Activated B cell treated with CpG ODN at 0.5 μM for 24 hours (primary cell): ENCODE measurements at regions of chr22 and their contacts with region 1.

Region 1: DNA sequence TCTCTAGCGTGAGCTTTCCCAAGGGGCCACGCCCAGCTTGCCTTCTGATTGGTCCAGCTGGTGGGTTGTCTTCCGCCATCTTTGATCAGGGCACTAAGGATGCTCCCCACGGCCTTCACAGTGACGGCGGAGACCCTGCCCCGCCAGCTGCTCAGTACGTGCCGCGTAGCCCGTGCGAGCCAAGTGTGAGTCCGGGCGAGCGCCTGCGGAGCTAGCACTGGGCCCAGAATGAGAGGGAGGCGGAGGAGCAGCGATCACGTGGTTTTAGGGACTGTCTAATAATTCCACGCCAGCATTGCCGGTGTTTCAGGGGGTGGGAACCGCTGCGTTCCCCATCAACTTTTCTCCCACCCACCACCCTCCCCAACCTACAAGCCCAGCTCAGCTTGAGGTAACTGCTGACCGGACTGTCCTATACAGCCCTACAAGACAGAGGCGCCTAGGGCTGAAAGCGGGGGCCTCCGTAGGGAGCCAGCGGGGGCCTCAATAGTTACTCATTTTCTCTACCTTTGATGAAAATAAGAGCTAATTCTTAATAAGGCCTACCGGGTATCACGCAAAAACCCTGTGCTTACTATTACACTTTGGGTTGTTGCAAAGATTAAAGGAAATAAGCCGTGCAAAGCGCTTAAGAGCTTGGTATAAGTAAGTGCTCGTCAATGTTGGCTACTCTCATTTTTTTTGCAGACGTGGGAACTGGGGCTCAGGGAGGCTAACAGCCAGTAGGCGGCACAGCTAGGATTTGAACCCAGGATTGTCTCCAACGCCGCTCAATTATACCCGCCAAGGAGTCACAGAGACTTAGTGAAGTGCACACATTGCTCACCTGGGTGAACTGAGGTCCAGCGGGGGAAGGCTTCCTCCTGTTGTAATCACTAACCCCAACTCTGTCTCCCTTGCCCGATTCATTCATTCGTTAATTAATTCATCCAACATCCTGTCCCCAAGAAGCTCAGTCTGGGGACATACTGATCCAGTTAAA is 1.3 kb upstream of the MTFP1 start:
- DNase-seq: peak; percentile 89
- ATAC-seq: peak; percentile 88
- H3K4me3 Mint-ChIP-seq: peak overlapping the region; percentile 97
- H3K27ac Mint-ChIP-seq: peak overlapping the region; percentile 96
- H3K4me1 Mint-ChIP-seq: peaks cover 47% of the 10 kb centered on the region
- H3K27me3 Mint-ChIP-seq: no peaks in the 10 kb centered on the region
- CTCF ChIP-seq: no peak

Region 2: GRCh38 chr22:29580200-29580810 is 844.0 kb before region 1 on chr22:
- CTCF ChIA-PET with region 1: no interaction called
- POLR2A ChIA-PET with region 1: no interaction called
- intact Hi-C with region 1: loop called (anchors 2 kb)
- DNase-seq: no peak
- ATAC-seq: no peak
- H3K4me3 Mint-ChIP-seq: peak overlapping the region; percentile 92
- H3K27ac Mint-ChIP-seq: peak overlapping the region; percentile 86
- H3K4me1 Mint-ChIP-seq: peaks cover 18% of the 10 kb centered on the region
- H3K27me3 Mint-ChIP-seq: no peaks in the 10 kb centered on the region
- CTCF ChIP-seq: no peak

Region 3: GRCh38 chr22:30262917-30263741 is 161.1 kb before region 1 on chr22:
- CTCF ChIA-PET with region 1: interaction called, 4 read pairs
- POLR2A ChIA-PET with region 1: interaction called, 3 read pairs
- intact Hi-C with region 1: loop called (anchors 1 kb)
- DNase-seq: peak; percentile 72
- ATAC-seq: peak; percentile 13
- H3K4me3 Mint-ChIP-seq: peak overlapping the region; percentile 59
- H3K27ac Mint-ChIP-seq: peak overlapping the region; percentile 18
- H3K4me1 Mint-ChIP-seq: peaks cover 27% of the 10 kb centered on the region
- H3K27me3 Mint-ChIP-seq: no peaks in the 10 kb centered on the region
- CTCF ChIP-seq: peak; percentile 97

Region 4: GRCh38 chr22:30356449-30357235 is 67.6 kb before region 1 on chr22 and contains the starts of genes CCDC157 and SF3A1:
- CTCF ChIA-PET with region 1: interaction called, 4 read pairs
- POLR2A ChIA-PET with region 1: interaction called, 12 read pairs
- intact Hi-C with region 1: loop called (anchors 1 kb)
- DNase-seq: peak; percentile 88
- ATAC-seq: peak; percentile 86
- H3K4me3 Mint-ChIP-seq: peak within 1 kb of the TSS; percentile 92
- H3K27ac Mint-ChIP-seq: peak within 1 kb of the TSS; percentile 76
- H3K4me1 Mint-ChIP-seq: peaks cover 43% of the 10 kb centered on the region
- H3K27me3 Mint-ChIP-seq: no peaks in the 10 kb centered on the region
- CTCF ChIP-seq: no peak
- total RNA-seq, gene CCDC157: 1.8 and 2.9 TPM in 2 replicates
- total RNA-seq, gene SF3A1: 263 and 269 TPM in 2 replicates

Region 5: GRCh38 chr22:30375312-30375849 is 48.9 kb before region 1 on chr22:
- CTCF ChIA-PET with region 1: no interaction called
- POLR2A ChIA-PET with region 1: no interaction called
- intact Hi-C with region 1: no loop called
- DNase-seq: no peak
- ATAC-seq: no peak
- H3K4me3 Mint-ChIP-seq: no peak overlapping the region
- H3K27ac Mint-ChIP-seq: no peak overlapping the region
- H3K4me1 Mint-ChIP-seq: peaks cover 3% of the 10 kb centered on the region
- H3K27me3 Mint-ChIP-seq: no peaks in the 10 kb centered on the region
- CTCF ChIP-seq: no peak

Region 6: DNA sequence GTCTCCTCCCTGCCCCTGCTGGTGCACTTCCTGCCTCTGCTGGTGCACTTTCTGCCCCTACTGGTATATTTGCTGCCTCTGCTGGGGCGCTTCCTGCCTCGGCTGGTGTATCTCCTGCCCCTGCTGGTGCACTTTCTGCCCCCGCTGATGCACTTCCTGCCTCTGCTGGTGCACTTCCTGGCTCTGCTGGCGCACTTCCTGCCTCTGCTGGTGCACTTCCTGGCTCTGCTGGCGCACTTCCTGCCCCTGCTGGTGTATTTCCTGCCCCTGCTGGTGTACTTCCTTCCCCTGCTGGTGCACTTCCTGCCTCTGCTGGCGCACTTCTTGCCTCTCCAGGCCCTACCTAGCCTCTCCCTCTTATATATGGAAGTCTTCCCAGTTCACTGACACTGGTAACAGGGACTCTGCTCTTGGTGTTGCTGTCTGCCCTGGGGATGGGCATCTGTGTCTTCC is 11.4 kb after region 1 on chr22:
- CTCF ChIA-PET with region 1: interaction called, 8 read pairs
- POLR2A ChIA-PET with region 1: interaction called, 36 read pairs
- intact Hi-C with region 1: loop called (anchors 1 kb)
- DNase-seq: no peak
- ATAC-seq: peak; percentile 71
- H3K4me3 Mint-ChIP-seq: peak overlapping the region; percentile 64
- H3K27ac Mint-ChIP-seq: peak overlapping the region; percentile 79
- H3K4me1 Mint-ChIP-seq: peaks cover 14% of the 10 kb centered on the region
- H3K27me3 Mint-ChIP-seq: peaks cover 15% of the 10 kb centered on the region
- CTCF ChIP-seq: no peak

Region 7: GRCh38 chr22:30492144-30492543 is 67.9 kb after region 1 on chr22:
- CTCF ChIA-PET with region 1: no interaction called
- POLR2A ChIA-PET with region 1: no interaction called
- intact Hi-C with region 1: no loop called
- DNase-seq: no peak
- ATAC-seq: no peak
- H3K4me3 Mint-ChIP-seq: no peak overlapping the region
- H3K27ac Mint-ChIP-seq: no peak overlapping the region
- H3K4me1 Mint-ChIP-seq: no peaks in the 10 kb centered on the region
- H3K27me3 Mint-ChIP-seq: peaks cover 19% of the 10 kb centered on the region
- CTCF ChIP-seq: no peak

Region 8: GRCh38 chr22:30547188-30547587 is 122.9 kb after region 1 on chr22:
- CTCF ChIA-PET with region 1: no interaction called
- POLR2A ChIA-PET with region 1: no interaction called
- intact Hi-C with region 1: no loop called
- DNase-seq: no peak
- ATAC-seq: no peak
- H3K4me3 Mint-ChIP-seq: no peak overlapping the region
- H3K27ac Mint-ChIP-seq: no peak overlapping the region
- H3K4me1 Mint-ChIP-seq: no peaks in the 10 kb centered on the region
- H3K27me3 Mint-ChIP-seq: peaks cover 28% of the 10 kb centered on the region
- CTCF ChIP-seq: no peak

Region 9: DNA sequence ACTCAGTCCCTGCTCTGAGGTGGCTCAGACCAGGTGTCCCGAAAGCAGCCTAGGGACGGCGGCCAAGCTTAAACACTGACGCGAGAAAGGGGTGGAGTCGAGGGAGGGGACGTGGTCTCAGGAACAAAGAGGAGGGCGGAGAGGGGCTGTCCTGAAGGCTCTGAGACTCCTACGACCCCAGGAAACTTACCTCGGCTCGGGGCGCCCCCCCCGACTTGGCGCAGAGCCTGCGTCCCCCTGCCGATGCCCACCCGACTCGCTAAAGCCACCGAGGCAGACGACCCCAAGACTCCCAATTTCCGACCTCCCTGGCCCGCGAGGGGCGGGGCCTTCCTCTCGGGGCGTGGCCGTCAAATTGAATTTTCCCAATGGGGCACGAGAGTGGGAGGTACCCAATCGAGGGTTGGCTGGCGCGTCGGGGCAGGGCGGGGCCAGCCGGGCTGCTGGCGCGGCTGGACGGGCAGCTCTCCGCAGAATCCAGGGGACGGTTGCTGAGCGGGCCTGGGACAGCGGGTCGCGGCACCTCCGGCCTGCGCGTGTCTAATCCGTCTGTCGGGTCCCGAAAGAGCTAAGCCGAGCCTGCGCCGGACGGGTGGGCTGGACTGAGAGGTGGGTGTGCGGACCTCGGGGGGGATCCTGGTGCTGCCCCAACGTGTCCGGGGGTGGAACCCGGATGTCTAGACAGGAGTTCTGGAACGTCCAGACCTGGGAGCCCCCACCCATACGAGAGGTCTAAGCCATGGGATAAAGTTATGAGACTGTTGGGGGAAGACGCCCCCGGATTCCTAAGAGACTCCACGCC is 656.8 kb after region 1 on chr22 and contains the start of gene SMTN:
- CTCF ChIA-PET with region 1: no interaction called
- POLR2A ChIA-PET with region 1: interaction called, 3 read pairs
- intact Hi-C with region 1: loop called (anchors 10 kb)
- DNase-seq: peak; percentile 93
- ATAC-seq: peak; percentile 75
- H3K4me3 Mint-ChIP-seq: peak within 1 kb of the TSS; percentile 90
- H3K27ac Mint-ChIP-seq: no peak within 1 kb of the TSS
- H3K4me1 Mint-ChIP-seq: peaks cover 36% of the 10 kb centered on the region
- H3K27me3 Mint-ChIP-seq: no peaks in the 10 kb centered on the region
- CTCF ChIP-seq: no peak
- total RNA-seq, gene SMTN: 2.8 and 3.1 TPM in 2 replicates